ENCODE measurements at regions of chr1 and their contacts with region 1.

Region 1: DNA sequence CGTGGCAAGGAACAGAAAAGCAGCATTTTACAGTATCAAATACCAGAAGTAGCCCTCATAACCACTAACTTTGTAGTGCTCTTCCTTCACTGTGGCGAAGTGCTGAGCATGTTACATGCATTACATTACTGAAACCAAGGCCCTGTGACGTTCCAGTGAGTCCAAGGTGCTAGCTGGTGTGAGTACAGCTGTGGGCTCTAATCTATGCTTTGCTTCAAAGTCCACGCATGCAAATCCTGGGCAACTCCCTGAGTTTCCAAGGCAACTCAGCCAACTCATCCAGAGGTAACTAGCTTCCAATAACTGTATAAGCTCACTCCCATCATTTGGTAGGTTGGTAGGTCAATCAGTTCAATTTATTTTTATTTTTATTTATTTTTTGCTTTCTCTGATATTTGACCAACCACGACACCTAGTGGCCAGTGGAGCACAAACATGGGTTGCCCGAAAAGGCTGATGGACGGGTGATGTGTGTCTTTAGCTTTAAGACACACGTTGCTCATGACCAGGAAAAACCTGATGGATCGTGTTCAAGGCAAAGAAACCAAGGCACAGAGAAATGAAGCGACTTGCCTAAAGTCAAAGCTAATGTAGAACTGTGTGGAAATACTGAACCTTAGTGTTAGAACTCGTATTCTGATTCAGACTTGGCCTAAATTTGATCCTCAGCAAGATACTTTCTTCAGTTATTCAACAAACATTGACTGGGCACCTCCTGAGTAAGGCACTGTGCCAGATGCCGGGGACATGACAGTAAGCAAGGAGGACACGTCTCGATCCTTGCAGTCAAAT is 73.0 kb downstream of the GNG12 start:
- DNase-seq: no peak
- H3K4me3 ChIP-seq: no peak overlapping the region
- H3K27me3 ChIP-seq: no peaks in the 10 kb centered on the region
- CTCF ChIP-seq: peak; percentile 81

Region 2: DNA sequence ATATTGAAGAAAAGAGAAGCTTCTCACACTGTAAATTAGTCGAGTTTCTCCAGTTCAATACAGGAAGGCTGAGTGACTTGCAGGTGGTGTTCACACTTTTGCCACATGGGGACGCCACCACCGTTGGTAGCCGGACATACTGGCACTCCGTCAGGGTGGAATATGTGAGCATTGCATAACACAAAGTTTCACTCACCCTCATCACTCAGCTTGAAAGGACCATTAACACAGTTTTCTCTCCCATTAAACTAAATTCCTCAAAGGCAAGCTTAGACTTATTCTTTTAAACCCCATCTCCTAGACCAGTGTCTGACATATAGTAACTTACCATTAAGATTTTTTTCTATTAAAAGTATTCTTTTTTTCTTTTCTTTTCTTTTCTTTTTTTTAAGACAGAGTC is 224.8 kb before region 1 on chr1:
- CTCF ChIA-PET with region 1: interaction called, 233 read pairs
- POLR2A ChIA-PET with region 1: interaction called, 8 read pairs
- DNase-seq: peak; percentile 45
- H3K4me3 ChIP-seq: no peak overlapping the region
- H3K27me3 ChIP-seq: no peaks in the 10 kb centered on the region
- CTCF ChIP-seq: peak; percentile 99

Region 3: GRCh38 chr1:67561704-67562113 is 198.5 kb before region 1 on chr1:
- CTCF ChIA-PET with region 1: interaction called, 93 read pairs
- POLR2A ChIA-PET with region 1: no interaction called
- DNase-seq: no peak
- H3K4me3 ChIP-seq: no peak overlapping the region
- H3K27me3 ChIP-seq: no peaks in the 10 kb centered on the region
- CTCF ChIP-seq: peak; percentile 90

Region 4: GRCh38 chr1:67685067-67685557 is 75.1 kb before region 1 on chr1 and contains the start of gene GADD45A:
- CTCF ChIA-PET with region 1: interaction called, 33 read pairs
- POLR2A ChIA-PET with region 1: interaction called, 3 read pairs
- DNase-seq: peak; percentile 97
- H3K4me3 ChIP-seq: peak within 1 kb of the TSS; percentile 85
- H3K27me3 ChIP-seq: no peaks in the 10 kb centered on the region
- CTCF ChIP-seq: no peak
- polyA plus RNA-seq, gene GADD45A: 27.4 and 32.1 TPM in 2 replicates

Region 5: GRCh38 chr1:67749844-67750689 is 10.2 kb before region 1 on chr1:
- CTCF ChIA-PET with region 1: interaction called, 20 read pairs
- POLR2A ChIA-PET with region 1: no interaction called
- DNase-seq: no peak
- H3K4me3 ChIP-seq: peak overlapping the region; percentile 1; the same call in 1 of the 2 replicates
- H3K27me3 ChIP-seq: no peaks in the 10 kb centered on the region
- CTCF ChIP-seq: no peak

Region 6: DNA sequence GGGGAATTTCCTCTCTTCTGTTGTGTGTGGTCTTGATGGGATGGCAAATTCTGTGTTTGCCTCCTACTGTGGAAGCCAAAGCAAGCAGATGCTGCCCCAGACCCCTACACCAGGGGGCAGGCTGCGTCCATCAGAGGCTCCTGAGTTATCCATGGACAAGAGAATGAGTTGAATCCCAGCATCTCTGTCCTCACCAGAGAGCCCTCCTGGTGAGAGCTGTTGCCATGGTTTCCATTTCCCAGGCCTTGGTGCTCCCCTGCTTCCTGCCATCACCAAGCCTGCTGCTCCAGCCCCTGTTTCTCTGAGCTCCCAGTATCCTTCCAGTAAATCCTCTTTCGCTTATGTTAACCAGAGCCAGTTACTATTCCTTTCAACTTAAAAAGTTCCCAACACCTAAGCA is 93.5 kb after region 1 on chr1:
- CTCF ChIA-PET with region 1: interaction called, 67 read pairs
- POLR2A ChIA-PET with region 1: no interaction called
- DNase-seq: no peak
- H3K4me3 ChIP-seq: no peak overlapping the region
- H3K27me3 ChIP-seq: no peaks in the 10 kb centered on the region
- CTCF ChIP-seq: peak; percentile 96

Measured in BJ (cell line).